Left ventricle myocardium superior (tissue), 1 donor: ENCODE measurements at regions of chr3 and their contacts with region 1.

Region 1: DNA sequence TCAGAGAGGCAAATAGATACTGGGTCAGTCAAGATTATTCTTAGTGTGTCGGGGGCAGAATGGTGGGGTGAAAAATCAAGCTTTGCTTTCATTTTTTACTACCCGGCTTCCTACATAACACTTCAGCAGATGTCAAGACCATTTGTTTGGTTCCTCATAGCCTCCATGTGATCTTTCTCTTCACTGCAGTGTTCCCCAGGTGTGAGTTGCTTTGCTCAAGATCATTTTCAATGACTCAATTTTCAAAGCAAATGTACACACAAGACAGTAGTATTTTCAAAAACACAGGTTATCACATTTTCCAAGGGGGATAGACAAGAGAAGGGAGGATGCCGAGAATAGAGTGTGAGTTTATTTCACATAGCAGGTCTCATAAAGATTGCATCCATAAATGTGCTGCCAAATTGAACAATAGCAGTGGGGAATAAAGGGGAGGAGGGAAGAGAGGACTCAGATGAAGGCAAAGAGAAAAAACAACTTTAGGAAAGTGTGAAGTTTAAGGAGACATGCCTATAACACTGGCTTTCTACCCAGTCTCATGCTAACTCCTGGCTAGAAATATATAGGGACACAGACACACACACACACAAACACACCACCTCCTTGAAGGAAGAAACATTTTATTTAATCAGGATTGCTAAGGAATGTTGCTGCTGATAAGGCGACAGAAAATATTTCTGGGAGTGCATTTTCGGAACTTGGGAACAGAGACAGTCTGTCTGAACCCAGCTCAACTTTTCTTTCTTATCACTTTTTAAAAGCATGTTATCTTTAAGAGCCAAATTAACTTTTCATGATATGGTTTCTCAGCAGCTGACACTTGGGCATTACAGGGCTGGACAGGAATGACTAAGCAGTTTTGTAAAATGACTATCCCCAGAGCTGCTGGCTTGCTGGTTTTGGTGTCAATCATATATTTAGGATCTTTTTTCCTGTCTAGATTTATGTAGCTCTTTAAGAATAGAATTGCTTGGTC is 402.4 kb downstream of the RBMS3 start:
- DNase-seq: no peak
- ATAC-seq: peak; percentile 86

Region 2: DNA sequence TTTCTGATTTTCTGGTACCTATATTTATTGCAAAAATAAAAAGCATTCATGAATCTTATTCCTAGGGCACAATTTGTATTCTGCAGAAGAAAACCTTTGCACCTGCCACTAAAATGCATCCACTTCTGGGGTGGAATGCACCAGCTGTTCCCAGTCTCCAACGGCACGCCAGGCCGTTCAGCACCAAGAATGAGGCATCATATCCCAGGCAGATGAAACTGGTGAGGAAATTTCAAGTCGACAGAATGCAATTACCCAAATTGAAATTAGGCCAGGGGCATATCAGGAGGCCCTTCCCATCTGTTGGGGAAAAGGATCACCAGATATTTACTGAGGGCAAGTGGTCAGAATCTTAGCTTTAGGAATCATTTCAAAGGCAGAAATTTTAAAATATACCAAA is 416.1 kb before region 1 on chr3:
- intact Hi-C with region 1: no loop called
- DNase-seq: no peak
- ATAC-seq: no peak

Region 3: GRCh38 chr3:29280404-29281093 is 402.8 kb before region 1 on chr3 and contains the start of gene RBMS3:
- intact Hi-C with region 1: loop called (anchors 10 kb)
- DNase-seq: peak; percentile 84
- ATAC-seq: peak; percentile 92
- total RNA-seq, gene RBMS3: 20.7 TPM